Esophagus muscularis mucosa (tissue), 4 donors: ENCODE measurements at regions of chr5 and their contacts with region 1.

Region 1: GRCh38 chr5:128355961-128356360 is 182.1 kb downstream of the FBN2 start:
- DNase-seq: no peak
- H3K4me3 ChIP-seq: no peak overlapping the region
- H3K27ac ChIP-seq: no peak overlapping the region
- H3K4me1 ChIP-seq: peaks cover 0 to 15% (median 10%) of the 10 kb centered on the region in 4 donors
- H3K27me3 ChIP-seq: no peaks in the 10 kb centered on the region
- CTCF ChIP-seq: no peak
- EP300 ChIP-seq: no peak
- POLR2A ChIP-seq: no peak

Region 2: DNA sequence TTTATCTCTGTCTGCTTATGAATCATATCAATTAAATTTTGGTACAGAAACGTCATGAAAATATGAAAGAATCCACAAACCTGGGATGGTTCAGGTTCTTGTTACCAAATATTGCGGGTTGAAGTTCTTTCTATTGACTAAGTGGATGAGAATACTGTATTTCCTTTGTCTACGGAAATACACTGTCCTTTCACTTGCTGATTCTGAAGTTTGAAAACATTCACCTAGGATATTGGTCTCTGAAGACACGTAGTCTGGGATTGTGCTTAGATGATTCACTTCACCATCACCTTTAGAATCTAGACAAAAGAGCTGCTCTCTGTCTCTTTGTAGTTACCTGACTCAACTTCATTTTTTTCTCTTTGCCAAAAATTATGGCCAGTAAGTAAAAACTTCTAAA is 40.3 kb before region 1 on chr5:
- intact Hi-C with region 1: no loop called
- DNase-seq: no peak
- H3K4me3 ChIP-seq: no peak overlapping the region
- H3K27ac ChIP-seq: no peak overlapping the region
- H3K4me1 ChIP-seq: no peaks in the 10 kb centered on the region
- H3K27me3 ChIP-seq: no peaks in the 10 kb centered on the region
- CTCF ChIP-seq: no peak
- EP300 ChIP-seq: no peak
- POLR2A ChIP-seq: no peak

Region 3: DNA sequence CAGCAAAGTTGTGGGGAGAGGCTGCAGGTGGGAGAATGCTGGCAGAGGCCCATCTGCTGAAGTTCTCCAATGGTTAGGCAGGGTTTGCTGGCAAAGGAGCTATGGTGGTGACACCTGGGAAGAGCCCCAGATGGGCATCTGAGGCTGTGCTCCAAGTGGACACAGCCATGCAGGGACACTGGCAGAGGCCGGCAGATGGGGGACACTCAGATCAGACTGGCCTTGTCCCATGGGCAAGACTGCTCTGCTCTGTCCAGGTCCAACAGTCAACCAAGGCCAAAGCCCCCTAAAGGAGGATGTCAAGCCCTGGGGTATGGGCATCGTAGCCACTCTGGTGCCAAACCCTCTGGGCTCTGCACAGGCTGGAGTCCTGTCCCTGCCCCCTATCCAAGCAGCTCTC is 33.3 kb after region 1 on chr5:
- intact Hi-C with region 1: loop called (anchors 2 kb)
- DNase-seq: no peak
- H3K4me3 ChIP-seq: no peak overlapping the region
- H3K27ac ChIP-seq: no peak overlapping the region
- H3K4me1 ChIP-seq: no peaks in the 10 kb centered on the region
- H3K27me3 ChIP-seq: no peaks in the 10 kb centered on the region
- CTCF ChIP-seq: no peak
- EP300 ChIP-seq: no peak
- POLR2A ChIP-seq: no peak